MCF 10A (cell line): ENCODE measurements at regions of chr5 and their contacts with region 1.

Region 1: GRCh38 chr5:116766470-116766947 is 191.9 kb upstream of the SEMA6A start:
- DNase-seq: peak; percentile 97
- H3K4me3 Mint-ChIP-seq: no peak overlapping the region
- H3K27ac Mint-ChIP-seq: peak overlapping the region; percentile 89
- H3K4me1 Mint-ChIP-seq: peaks cover 27% of the 10 kb centered on the region
- H3K27me3 Mint-ChIP-seq: no peaks in the 10 kb centered on the region
- CTCF ChIP-seq: no peak

Region 2: DNA sequence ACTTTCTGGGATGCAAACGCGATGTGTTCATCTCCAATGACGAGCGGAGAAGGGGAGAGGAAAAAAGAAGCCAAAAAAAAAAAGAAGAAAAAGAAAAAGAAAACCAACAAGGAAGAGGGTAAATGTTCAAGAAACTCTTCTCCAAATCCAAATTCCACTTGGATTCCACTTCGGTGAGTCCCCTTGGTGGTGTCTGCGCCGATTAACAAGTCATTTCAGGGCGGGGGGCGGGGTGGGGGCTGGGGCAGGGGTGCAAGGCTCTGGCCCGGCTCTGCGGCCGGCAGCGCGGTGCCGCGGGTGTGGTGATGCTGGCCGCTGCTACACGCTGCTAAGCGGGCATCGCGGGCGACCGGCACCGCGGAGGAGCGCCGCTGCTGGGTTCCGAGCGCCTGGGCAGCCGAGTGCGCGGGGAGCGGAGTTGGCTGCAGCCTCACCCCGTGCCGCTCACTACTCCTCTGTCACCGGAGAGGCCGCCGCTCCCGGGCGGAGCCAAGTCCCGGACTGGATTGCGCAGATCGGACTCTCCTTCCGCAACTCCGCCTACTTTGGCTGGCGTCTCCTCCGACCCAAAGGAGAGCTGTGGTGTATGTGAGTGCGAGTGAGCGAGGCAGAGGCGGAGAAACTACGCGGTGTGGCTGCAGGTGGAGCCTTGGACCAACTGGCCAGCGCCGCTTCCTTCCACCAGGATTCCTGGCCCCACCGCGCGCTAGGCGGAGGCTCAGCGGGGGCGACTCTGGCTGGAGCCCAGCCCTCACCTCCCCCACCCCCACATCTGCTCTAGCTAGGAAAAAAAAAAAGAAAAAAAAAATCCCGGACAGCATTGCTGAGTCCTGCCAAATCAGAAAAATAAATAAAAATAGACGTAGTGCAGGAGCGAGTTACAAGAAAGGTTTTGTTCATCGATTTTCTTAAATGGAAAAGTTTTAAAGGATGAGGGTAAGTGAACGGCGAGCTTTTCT is 191.9 kb before region 1 on chr5 and contains the start of gene SEMA6A:
- CTCF ChIA-PET with region 1: interaction called, 5 read pairs
- POLR2A ChIA-PET with region 1: interaction called, 11 read pairs
- intact Hi-C with region 1: no loop called
- DNase-seq: peak; percentile 94
- H3K4me3 Mint-ChIP-seq: peak within 1 kb of the TSS; percentile 93
- H3K27ac Mint-ChIP-seq: peak within 1 kb of the TSS; percentile 37
- H3K4me1 Mint-ChIP-seq: peaks cover 5% of the 10 kb centered on the region
- H3K27me3 Mint-ChIP-seq: no peaks in the 10 kb centered on the region
- CTCF ChIP-seq: peak; percentile 12
- total RNA-seq, gene SEMA6A: 1.5 and 2.1 TPM in 2 replicates

Region 3: DNA sequence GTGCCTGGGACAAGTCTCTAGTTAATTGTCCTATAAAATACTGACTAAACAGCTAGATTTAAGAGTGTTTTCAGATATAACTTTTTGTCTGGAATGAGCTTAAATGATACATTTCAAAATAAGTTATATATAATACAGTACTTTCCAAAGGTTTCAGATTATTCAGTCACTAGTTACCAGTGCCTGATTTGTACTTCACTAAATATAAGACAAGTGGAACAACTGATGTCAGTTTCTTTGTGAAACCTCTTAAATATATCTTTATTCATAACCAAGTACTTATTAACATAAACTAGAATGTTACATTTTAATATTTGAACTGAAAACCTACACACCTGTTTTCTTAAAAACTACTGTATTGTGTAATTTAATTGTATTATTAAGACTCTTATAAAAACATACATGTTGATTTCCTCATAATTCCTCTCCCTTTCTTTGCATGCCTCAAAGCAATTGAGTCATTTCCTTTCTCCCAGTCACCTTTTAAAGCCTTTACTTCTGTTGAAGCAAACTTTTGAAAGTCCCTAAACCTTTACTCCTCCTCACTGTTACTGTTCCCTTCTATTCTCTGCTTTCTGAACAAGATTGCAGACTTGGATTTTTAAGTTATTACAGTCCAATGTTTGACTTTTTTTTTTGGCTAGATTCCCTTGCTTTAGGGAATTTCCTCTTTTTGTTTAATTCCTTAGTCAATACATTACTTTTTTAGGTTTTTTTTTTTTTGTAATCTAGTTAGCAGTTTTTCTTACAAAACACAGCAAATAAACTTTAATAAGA is 183.2 kb before region 1 on chr5:
- CTCF ChIA-PET with region 1: no interaction called
- POLR2A ChIA-PET with region 1: interaction called, 4 read pairs
- intact Hi-C with region 1: loop called (anchors 5 kb)
- DNase-seq: peak; percentile 81
- H3K4me3 Mint-ChIP-seq: no peak overlapping the region
- H3K27ac Mint-ChIP-seq: peak overlapping the region; percentile 79
- H3K4me1 Mint-ChIP-seq: peaks cover 17% of the 10 kb centered on the region
- H3K27me3 Mint-ChIP-seq: no peaks in the 10 kb centered on the region
- CTCF ChIP-seq: no peak

Region 4: DNA sequence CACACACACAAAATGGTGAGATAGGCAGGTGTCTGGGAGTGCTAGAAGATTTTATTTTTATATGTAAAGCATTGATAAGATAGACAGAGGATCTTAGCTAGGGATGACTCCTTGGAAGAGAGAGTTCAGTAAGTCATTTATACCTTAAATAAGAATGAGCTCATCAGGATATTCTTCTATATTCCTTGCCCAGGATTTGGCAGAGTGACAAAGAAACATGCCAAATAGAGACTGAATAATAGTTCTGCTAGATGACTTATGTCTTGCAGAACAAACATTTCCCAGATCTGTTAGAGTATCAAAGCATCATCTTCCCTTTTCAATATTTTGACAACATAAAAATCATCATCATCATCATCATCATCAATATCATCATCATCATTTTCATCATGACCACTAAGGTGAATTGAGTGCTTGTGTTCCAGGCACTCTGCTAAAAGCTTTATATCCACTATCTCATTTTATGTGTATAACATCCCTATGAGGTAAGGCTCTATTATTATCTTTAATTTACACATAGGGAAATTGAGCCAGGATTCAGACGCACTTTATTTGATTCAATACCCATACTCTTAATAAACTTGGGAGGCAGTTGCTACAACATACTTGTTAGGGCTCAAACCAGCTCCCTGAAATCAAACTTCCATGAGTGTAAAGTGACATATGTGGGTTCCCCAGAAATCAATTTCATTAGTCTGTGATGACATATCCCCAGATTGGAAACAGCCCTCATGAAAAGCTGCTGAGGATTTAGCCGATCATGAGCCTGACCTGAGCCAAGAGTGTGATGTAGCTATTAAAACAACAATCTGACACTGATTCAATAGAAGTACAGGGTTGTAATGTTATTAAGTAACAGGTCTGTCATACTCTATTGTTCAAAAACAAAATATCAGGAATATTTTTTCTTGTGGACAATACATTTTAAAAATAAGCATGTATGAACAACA is 15.6 kb before region 1 on chr5:
- CTCF ChIA-PET with region 1: no interaction called
- POLR2A ChIA-PET with region 1: interaction called, 15 read pairs
- intact Hi-C with region 1: no loop called
- DNase-seq: peak; percentile 38
- H3K4me3 Mint-ChIP-seq: no peak overlapping the region
- H3K27ac Mint-ChIP-seq: no peak overlapping the region
- H3K4me1 Mint-ChIP-seq: no peaks in the 10 kb centered on the region
- H3K27me3 Mint-ChIP-seq: no peaks in the 10 kb centered on the region
- CTCF ChIP-seq: no peak